ENCODE measurements at regions of chr4 and their contacts with region 1.

Region 1: GRCh38 chr4:10018818-10019461 is 2.4 kb downstream of the SLC2A9 start:
- DNase-seq: peak; percentile 88
- ATAC-seq: peak; percentile 98
- H3K4me3 ChIP-seq: peak overlapping the region; percentile 64
- H3K27ac ChIP-seq: peak overlapping the region; percentile 70
- H3K4me1 ChIP-seq: peaks cover 6% of the 10 kb centered on the region
- H3K27me3 ChIP-seq: no peaks in the 10 kb centered on the region
- CTCF ChIP-seq: peak; percentile 94

Region 2: DNA sequence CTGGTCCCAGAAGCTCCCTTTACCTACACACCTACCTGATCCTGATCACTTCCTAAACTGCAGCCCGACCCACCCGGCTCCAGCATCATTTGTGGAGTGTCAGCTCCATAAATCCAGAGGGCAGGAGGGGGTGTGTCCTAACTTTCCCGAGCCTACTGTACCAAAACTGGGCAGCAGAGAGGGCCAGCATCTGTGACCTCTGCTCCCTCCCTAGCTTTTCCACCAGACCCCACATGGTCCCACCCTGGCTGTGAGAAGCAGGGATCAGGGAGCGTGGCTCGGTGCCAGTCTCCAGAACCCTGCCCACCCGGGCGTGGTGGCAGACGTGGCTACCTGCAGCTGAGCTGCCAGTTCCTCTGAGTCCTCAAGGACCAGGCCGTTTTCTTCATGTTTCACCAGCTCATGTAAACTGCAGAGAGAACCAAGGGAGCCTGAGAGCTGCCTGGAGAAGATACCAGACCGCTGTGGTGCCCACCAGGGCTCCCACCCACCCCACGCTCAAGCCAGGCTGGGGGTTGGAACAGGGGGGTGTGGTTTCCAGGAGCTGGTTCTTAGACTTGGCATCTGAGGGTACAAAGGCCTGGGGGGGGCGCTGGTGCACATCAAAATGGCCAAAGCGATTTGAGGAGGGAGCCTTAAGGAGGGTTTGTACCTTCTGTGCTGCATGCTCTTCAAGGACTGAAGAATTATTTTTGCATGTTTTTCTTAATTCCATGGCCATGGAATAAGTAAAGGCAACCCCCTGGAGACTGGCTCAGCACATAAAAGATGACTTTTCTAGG is 314.2 kb before region 1 on chr4:
- CTCF ChIA-PET with region 1: interaction called, 4 read pairs
- POLR2A ChIA-PET with region 1: no interaction called
- intact Hi-C with region 1: loop called (anchors 10 kb)
- DNase-seq: no peak
- ATAC-seq: no peak
- H3K4me3 ChIP-seq: no peak overlapping the region
- H3K27ac ChIP-seq: no peak overlapping the region
- H3K4me1 ChIP-seq: no peaks in the 10 kb centered on the region
- H3K27me3 ChIP-seq: no peaks in the 10 kb centered on the region
- CTCF ChIP-seq: no peak

Region 3: DNA sequence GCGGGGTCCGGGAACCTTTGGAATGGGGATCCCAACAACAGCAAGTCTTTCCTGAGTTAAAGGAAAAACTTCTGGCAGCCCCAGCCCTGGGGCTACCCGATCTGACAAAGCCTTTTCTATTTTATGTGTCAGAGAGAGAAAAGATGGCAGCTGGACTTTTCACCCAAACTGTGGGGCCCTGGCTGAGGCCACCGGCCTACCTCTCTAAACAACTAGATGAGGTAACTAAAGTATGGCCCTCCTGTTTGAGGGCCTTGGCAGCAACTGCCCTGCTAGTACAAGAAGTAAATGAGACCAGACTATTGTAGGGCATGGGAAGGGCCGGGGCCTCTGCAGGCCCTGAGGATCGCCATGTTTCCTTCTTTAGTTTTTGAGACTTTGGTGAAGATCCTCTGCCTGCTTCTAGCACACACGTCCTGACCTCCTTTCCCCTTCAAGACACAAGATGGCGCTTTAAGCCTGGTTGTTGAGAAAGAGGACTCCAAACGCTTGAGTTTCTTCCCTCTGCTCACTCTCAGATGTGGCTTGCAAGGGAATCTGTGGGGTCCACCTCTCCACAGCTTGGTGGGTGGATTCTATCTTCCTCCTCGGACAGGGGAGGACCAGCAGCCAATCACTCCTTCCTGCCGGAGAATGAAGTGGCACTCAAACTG is 256.0 kb before region 1 on chr4:
- CTCF ChIA-PET with region 1: no interaction called
- POLR2A ChIA-PET with region 1: no interaction called
- intact Hi-C with region 1: loop called (anchors 1 kb)
- DNase-seq: peak; percentile 72
- ATAC-seq: no peak
- H3K4me3 ChIP-seq: no peak overlapping the region
- H3K27ac ChIP-seq: no peak overlapping the region
- H3K4me1 ChIP-seq: no peaks in the 10 kb centered on the region
- H3K27me3 ChIP-seq: no peaks in the 10 kb centered on the region
- CTCF ChIP-seq: peak; percentile 60

Region 4: DNA sequence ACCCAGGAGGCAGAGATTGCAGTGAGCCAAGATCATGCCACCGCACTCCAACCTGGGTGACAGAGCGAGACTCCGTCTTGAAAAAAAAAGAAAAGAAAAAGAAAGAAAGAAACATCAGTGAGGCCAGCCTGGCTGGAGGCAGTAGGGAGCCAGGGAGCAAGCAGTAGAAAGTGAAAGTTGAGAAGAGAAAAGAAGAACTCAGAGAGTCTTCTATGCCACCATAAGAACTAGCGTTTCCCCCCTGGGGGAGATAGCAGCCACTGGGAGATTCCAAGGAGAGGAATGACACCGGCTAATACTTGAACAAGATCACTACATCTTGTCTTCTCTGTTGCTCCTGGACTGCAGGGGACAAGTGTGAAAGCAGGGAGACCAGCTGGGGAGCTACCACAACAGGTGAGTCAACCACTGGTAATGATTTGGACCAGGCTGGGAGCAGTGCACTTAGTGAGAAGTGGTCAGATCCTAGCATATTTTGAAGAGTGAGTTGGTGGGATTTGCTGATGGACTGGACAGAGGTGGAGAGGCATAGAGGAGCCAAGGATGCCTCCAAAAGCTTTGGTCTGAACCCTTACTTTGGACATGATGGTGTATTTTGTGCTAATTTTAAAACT is 31.1 kb before region 1 on chr4:
- CTCF ChIA-PET with region 1: no interaction called
- POLR2A ChIA-PET with region 1: no interaction called
- intact Hi-C with region 1: no loop called
- DNase-seq: no peak
- ATAC-seq: no peak
- H3K4me3 ChIP-seq: no peak overlapping the region
- H3K27ac ChIP-seq: no peak overlapping the region
- H3K4me1 ChIP-seq: no peaks in the 10 kb centered on the region
- H3K27me3 ChIP-seq: no peaks in the 10 kb centered on the region
- CTCF ChIP-seq: no peak

Region 5: GRCh38 chr4:10063544-10064300 is 44.8 kb after region 1 on chr4:
- CTCF ChIA-PET with region 1: no interaction called
- POLR2A ChIA-PET with region 1: no interaction called
- intact Hi-C with region 1: loop called (anchors 1 kb)
- DNase-seq: peak; percentile 44
- ATAC-seq: peak; percentile 55
- H3K4me3 ChIP-seq: no peak overlapping the region
- H3K27ac ChIP-seq: no peak overlapping the region
- H3K4me1 ChIP-seq: peaks cover 9% of the 10 kb centered on the region
- H3K27me3 ChIP-seq: no peaks in the 10 kb centered on the region
- CTCF ChIP-seq: peak; percentile 56